ENCODE measurements at regions of chr2 and their contacts with region 1.

Region 1: DNA sequence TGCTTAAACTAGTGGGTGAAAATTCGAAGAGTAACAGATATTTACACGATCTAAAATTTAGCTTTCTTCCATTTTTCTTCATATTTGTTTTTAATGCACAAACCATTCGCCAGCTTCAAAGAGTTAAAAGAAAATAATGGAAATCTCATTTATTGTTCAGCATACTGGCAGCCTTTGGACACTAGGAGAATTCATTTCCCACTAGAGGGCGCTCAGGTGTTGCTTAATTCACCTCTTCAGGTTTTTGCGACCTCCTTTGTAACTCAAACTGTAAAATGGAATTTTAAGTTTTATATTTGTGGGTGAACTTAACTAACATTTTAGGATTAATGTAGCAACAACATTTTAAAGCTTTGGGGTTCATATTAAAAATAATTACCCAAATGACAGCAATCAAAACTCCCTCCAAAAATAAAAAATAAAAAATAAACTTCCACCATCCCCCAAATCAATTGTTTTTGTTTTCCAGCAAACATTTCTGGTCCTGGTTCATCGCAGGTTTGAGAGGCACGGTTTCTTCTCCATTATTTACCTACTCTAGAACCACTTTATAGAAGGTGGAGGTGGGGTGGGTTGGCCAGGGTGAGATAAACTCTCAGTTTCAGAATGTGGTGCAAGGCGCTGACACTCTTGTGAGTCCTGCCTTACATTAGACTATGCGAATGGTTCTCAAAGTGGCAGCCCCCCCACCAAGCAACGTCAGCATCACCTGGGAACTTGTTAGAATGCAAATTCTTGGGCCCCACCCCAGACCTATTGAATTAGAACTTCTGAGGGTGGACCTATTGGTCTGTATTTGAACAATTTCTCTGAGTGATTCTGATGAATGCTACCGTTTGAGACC is 24.7 kb upstream of the PNPT1 start:
- DNase-seq: peak; percentile 65 to 81
- H3K4me3 ChIP-seq: no peak overlapping the region
- H3K4me3 Mint-ChIP-seq: no peak overlapping the region
- H3K27ac Mint-ChIP-seq: no peak overlapping the region
- H3K4me1 ChIP-seq: peaks cover 39% of the 10 kb centered on the region
- H3K4me1 Mint-ChIP-seq: peaks cover 31% of the 10 kb centered on the region
- H3K27me3 ChIP-seq: no peaks in the 10 kb centered on the region
- H3K27me3 Mint-ChIP-seq: no peaks in the 10 kb centered on the region
- CTCF ChIP-seq: peak; percentile 79 to 90

Region 2: DNA sequence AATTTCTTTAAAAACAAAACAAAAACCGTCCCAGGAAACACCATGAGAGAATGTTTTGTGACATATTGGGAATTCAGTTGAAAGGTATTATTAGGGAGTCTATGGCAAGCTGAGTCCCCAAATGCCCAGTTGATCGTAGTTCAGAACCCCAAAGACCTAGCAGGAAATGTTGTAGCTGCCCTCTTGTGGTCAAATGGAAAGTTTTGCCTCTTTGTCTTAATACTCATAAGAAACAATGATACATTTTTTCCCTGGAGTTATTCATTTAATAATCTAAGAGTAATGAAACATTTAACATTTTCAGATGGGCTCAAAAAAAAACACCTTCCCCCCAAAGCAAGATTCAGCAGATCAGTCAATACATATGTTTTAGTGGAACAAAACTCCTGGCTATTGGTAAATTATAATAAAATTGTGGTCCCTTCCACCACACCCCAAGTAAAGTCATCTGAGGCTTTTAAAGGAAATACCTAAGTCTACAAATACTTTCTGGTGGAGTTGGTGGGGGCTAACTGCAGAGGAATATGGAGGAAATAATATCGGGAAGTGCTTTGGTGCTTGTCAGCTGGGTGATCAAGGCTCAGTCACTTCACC is 243.0 kb after region 1 on chr2:
- CTCF ChIA-PET with region 1: interaction called, 3 read pairs
- POLR2A ChIA-PET with region 1: no interaction called
- intact Hi-C with region 1: loop called (anchors 1 kb)
- DNase-seq: peak in 1 of 2 experiments; percentile 42
- H3K4me3 ChIP-seq: no peak overlapping the region
- H3K4me3 Mint-ChIP-seq: no peak overlapping the region
- H3K27ac Mint-ChIP-seq: peak overlapping the region; percentile 31
- H3K4me1 ChIP-seq: peaks cover 14% of the 10 kb centered on the region
- H3K4me1 Mint-ChIP-seq: peaks cover 21% of the 10 kb centered on the region
- H3K27me3 ChIP-seq: no peaks in the 10 kb centered on the region
- H3K27me3 Mint-ChIP-seq: no peaks in the 10 kb centered on the region
- CTCF ChIP-seq: peak; percentile 66 to 83

Region 3: DNA sequence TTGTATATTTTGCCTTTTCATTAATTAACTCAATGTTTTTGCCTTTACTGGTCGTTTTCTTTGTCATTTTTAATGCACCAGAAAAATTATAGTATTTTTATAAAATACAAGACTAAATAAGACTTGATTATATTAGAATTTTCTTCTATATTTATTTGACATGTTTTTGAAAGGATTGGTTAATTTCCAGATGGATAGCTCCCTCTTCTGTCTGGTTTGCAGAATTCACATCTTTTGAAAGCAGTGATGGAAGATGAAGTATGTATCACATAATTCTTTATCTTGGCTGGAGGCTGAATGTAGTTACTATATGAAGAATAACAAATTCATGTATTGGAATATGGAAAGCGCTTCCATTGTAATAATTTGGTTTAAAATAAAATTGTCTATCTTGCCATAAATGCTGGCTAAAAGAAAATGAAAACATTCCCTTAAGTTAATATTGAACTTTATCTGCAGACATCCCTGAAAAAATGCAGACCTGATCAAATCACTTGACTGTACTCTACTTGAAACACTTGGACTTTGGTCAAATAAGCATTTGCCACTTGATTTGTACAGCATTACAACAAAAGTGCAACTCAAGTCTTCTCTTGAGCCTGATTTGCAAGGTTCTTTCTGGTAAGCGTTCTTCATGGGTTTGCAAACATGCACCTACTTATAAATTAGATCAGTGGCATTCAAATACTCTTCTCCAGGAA is 291.5 kb after region 1 on chr2:
- CTCF ChIA-PET with region 1: interaction called, 3 read pairs
- POLR2A ChIA-PET with region 1: no interaction called
- intact Hi-C with region 1: loop called (anchors 1 kb)
- DNase-seq: peak in 1 of 2 experiments; percentile 15
- H3K4me3 ChIP-seq: no peak overlapping the region
- H3K4me3 Mint-ChIP-seq: no peak overlapping the region
- H3K27ac Mint-ChIP-seq: no peak overlapping the region
- H3K4me1 ChIP-seq: no peaks in the 10 kb centered on the region
- H3K4me1 Mint-ChIP-seq: peaks cover 6% of the 10 kb centered on the region
- H3K27me3 ChIP-seq: no peaks in the 10 kb centered on the region
- H3K27me3 Mint-ChIP-seq: no peaks in the 10 kb centered on the region
- CTCF ChIP-seq: peak; percentile 52 to 59

Measured in Caco-2 (cell line).